ENCODE measurements at regions of chr1 and their contacts with region 1.

Region 1: GRCh38 chr1:83905315-83905907 is 93.5 kb downstream of the TTLL7 start:
- DNase-seq: peak; percentile 38
- H3K4me3 ChIP-seq: no peak overlapping the region
- H3K27ac ChIP-seq: no peak overlapping the region
- H3K4me1 ChIP-seq: no peaks in the 10 kb centered on the region
- CTCF ChIP-seq: peak; percentile 82

Region 2: DNA sequence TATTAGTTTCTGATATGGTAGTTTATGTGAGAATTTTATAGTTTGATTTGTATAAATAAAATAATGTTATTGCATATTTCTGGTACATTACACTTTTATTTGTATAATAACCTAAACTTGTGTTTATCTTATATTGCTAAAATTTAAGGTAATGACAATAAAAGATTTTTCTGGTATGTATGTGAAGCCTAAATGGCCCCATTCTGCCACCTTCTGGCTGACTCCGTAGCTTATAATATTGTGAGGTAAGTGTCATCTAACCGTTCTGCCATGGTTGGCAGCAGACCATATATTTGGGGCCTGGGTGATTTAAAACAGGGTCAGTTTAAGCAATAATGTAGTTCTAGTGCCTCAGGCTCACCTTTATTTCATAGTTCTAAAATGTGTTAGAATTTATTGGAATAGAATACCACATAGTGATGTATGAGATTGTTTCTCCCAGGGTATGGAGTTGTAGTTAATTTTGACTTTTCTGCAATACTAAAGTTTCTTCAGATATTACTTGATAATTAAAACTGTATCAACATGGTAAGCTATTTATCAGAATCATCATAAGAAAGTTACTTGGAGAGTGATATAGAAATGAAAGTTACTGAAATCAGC is 217.5 kb after region 1 on chr1:
- CTCF ChIA-PET with region 1: no interaction called
- POLR2A ChIA-PET with region 1: no interaction called
- intact Hi-C with region 1: loop called (anchors 2 kb)
- DNase-seq: peak; percentile 60
- H3K4me3 ChIP-seq: no peak overlapping the region
- H3K27ac ChIP-seq: no peak overlapping the region
- H3K4me1 ChIP-seq: no peaks in the 10 kb centered on the region
- CTCF ChIP-seq: peak; percentile 91

Region 3: DNA sequence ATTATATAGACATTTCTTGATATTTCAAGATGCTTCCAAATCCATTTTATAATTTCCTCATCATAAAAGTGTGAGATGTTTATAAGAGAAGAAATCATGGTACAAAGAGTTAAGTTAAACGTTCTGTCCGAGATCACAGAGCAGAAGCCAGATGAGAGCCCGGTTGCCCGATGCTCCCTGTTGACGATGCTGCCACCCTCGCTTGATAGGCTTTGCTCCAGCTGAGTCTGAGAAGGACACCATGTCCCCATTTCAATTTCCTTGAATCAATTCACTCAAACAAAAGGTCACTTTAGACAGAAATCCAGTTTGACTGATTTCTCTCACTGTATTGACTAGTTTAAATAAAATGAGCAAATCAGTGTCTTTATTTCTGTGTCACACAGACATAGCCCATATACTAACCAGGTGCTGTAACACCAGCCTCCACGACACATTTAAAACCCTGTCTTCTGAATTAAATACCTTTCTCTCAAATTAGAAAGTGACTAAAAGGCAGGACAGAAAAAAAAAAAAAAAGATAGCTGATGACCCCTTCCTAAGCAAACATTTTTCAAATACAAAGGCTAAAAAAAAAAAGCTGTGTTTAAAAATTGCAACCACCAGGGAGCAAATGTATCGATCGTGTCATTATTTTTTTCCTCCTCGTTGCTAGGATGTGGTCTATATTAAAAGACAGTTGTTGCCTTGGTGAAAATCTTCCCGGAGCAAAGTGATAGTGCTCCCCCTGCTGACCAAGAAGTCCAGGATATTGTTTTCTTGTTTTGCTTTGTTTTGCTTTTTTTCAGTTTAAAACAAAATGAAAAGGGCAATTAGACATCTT is 528.1 kb after region 1 on chr1:
- CTCF ChIA-PET with region 1: no interaction called
- POLR2A ChIA-PET with region 1: no interaction called
- intact Hi-C with region 1: loop called (anchors 10 kb)
- DNase-seq: peak; percentile 76
- H3K4me3 ChIP-seq: peak overlapping the region; percentile 52
- H3K27ac ChIP-seq: no peak overlapping the region
- H3K4me1 ChIP-seq: peaks cover 26% of the 10 kb centered on the region
- CTCF ChIP-seq: peak; percentile 95

Measured in OCI-LY7 (cell line).